Activated B cell treated with CpG ODN at 0.5 μM for 24 hours (primary cell): ENCODE measurements at regions of chr5 and their contacts with region 1.

Region 1: DNA sequence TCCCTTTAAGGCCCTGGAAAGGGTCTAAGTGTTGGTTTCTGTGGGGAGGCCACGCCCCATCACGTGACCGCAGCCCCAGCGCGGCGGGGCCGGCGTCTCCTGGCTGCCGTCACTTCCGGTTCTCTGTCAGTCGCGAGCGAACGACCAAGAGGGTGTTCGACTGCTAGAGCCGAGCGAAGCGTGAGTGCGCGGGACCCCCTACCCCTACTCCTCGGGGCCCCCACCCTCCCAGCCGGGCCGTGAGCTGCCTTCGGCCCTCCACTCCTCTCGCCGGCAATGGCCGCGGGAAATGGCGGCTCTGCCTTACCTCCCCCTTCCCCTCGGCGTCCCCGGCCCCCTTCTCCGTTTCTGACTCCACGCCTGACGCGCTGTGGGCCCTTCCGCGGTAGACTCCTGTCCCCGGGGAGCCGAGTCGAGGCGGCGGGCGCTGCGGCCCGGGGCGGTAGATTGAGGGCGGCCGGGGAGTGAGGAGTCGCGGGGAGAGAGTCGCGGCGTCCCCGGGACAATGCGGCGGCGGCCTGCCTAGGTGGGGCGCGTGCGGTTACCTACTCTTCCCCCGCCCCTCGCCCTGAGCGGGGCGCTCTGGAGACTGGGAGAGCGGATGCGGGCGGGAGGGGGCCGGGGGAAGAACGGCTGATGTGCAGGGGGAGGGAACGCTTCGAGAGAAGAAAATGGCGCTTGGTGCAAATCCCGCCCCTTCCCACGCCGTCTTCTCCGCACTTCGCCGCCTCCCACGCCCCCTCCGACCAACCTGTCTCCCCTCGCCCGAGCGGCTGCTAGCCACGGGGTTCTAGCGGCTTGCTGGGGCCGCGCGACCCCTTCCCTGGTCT is at the start of gene SUB1:
- DNase-seq: peak; percentile 88
- ATAC-seq: peak; percentile 60
- H3K4me3 Mint-ChIP-seq: peak within 1 kb of the TSS; percentile 91
- H3K27ac Mint-ChIP-seq: peak within 1 kb of the TSS; percentile 95
- H3K4me1 Mint-ChIP-seq: peaks cover 85% of the 10 kb centered on the region
- H3K27me3 Mint-ChIP-seq: no peaks in the 10 kb centered on the region
- CTCF ChIP-seq: no peak
- total RNA-seq, gene SUB1: 213 and 237 TPM in 2 replicates

Region 2: DNA sequence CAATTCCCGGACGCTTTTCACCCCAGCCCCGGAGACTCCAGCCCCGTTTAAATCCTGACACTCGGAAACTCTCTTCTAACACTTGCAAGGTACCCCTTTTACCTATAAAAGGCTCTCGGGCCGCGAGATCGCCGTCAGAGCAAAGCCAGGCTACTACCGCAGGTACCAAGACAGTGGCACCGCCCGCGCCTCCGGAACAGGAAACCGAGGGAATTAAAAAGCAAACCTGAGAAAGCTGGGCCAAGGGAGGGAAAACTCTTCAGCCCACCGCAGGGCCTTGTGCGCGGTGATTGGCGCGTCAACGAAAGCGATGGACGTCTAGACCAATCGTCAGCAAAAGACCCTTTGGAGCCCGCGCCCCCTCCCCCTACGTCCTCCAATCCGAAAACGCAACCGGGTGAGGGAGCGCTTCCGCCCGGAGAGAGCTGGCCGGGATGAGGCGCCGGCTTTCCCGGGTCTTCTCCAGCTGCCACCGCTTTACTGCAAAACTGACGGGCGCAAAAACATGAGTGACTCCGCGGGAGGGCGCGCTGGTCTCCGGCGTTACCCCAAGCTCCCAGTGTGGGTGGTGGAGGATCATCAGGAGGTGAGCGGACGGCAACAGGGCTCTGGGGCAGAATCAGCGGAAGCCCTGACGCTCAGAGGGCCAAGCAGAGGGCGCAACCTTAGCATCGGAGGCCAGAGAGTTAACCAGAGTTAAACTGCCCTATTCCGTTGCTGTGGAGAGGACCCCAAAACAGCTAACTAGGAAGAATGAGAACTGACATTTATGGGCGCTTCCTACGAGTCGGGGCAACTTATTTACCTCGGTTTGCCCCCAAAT is 1053.6 kb before region 1 on chr5 and contains the starts of genes C5orf22 and DROSHA:
- CTCF ChIA-PET with region 1: no interaction called
- POLR2A ChIA-PET with region 1: no interaction called
- intact Hi-C with region 1: loop called (anchors 5 kb)
- DNase-seq: peak; percentile 81
- ATAC-seq: peak; percentile 98
- H3K4me3 Mint-ChIP-seq: peak within 1 kb of the TSS; percentile 99
- H3K27ac Mint-ChIP-seq: peak within 1 kb of the TSS; percentile 92
- H3K4me1 Mint-ChIP-seq: peaks cover 43% of the 10 kb centered on the region
- H3K27me3 Mint-ChIP-seq: no peaks in the 10 kb centered on the region
- CTCF ChIP-seq: no peak
- total RNA-seq, gene C5orf22: 27.0 and 27.1 TPM in 2 replicates
- total RNA-seq, gene DROSHA: 53.8 and 59.8 TPM in 2 replicates

Region 3: GRCh38 chr5:32312647-32313523 is 272.8 kb before region 1 on chr5 and contains the start of gene MTMR12:
- CTCF ChIA-PET with region 1: no interaction called
- POLR2A ChIA-PET with region 1: no interaction called
- intact Hi-C with region 1: loop called (anchors 1 kb)
- DNase-seq: peak; percentile 100
- ATAC-seq: peak; percentile 89
- H3K4me3 Mint-ChIP-seq: peak within 1 kb of the TSS; percentile 90
- H3K27ac Mint-ChIP-seq: peak within 1 kb of the TSS; percentile 91
- H3K4me1 Mint-ChIP-seq: peaks cover 41% of the 10 kb centered on the region
- H3K27me3 Mint-ChIP-seq: no peaks in the 10 kb centered on the region
- CTCF ChIP-seq: no peak
- total RNA-seq, gene MTMR12: 26.8 and 36.3 TPM in 2 replicates

Region 4: GRCh38 chr5:32444431-32445286 is 141.0 kb before region 1 on chr5 and contains the start of gene ZFR:
- CTCF ChIA-PET with region 1: interaction called, 9 read pairs
- POLR2A ChIA-PET with region 1: interaction called, 19 read pairs
- intact Hi-C with region 1: loop called (anchors 1 kb)
- DNase-seq: peak; percentile 90
- ATAC-seq: peak; percentile 85
- H3K4me3 Mint-ChIP-seq: peak within 1 kb of the TSS; percentile 92
- H3K27ac Mint-ChIP-seq: peak within 1 kb of the TSS; percentile 92
- H3K4me1 Mint-ChIP-seq: peaks cover 60% of the 10 kb centered on the region
- H3K27me3 Mint-ChIP-seq: no peaks in the 10 kb centered on the region
- CTCF ChIP-seq: no peak
- total RNA-seq, gene ZFR: 60.2 and 64.3 TPM in 2 replicates

Region 5: DNA sequence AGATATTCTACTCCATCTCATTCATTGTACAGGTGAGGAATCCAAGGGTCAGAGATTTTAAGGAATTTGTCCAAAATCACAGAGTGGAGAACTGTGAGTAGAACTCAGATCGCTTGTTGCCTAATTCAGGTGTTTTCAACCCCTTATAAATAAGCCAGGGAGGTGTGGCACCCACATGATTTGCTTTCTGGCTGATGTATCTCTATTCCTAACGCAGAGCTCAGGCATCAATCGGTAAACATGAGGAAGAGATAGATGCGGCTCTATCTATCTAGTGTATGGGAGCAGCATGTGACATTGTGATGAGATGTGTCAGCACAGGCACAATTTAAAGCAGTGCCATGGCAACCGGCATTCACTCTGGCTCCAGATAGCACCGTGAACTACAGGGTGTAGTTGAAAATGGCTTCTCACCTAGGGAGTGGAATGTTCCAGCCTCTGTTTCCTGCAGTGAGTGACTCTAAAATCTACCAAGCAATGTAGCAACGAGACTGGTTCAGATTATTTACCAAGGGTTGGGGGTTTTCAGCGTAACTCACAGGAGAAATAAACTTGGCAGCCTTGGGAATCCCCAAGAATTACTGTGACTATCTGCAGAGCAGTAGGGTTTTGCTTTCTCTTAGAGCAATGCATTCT is 53.7 kb before region 1 on chr5:
- CTCF ChIA-PET with region 1: interaction called, 22 read pairs
- POLR2A ChIA-PET with region 1: interaction called, 44 read pairs
- intact Hi-C with region 1: loop called (anchors 1 kb)
- DNase-seq: no peak
- ATAC-seq: peak; percentile 73
- H3K4me3 Mint-ChIP-seq: peak overlapping the region; percentile 80
- H3K27ac Mint-ChIP-seq: peak overlapping the region; percentile 77
- H3K4me1 Mint-ChIP-seq: peaks cover 43% of the 10 kb centered on the region
- H3K27me3 Mint-ChIP-seq: no peaks in the 10 kb centered on the region
- CTCF ChIP-seq: no peak

Region 6: GRCh38 chr5:32613050-32613672 is 27.5 kb after region 1 on chr5:
- CTCF ChIA-PET with region 1: interaction called, 12 read pairs
- POLR2A ChIA-PET with region 1: no interaction called
- intact Hi-C with region 1: no loop called
- DNase-seq: peak; percentile 66
- ATAC-seq: peak; percentile 76
- H3K4me3 Mint-ChIP-seq: no peak overlapping the region
- H3K27ac Mint-ChIP-seq: no peak overlapping the region
- H3K4me1 Mint-ChIP-seq: peaks cover 2% of the 10 kb centered on the region
- H3K27me3 Mint-ChIP-seq: no peaks in the 10 kb centered on the region
- CTCF ChIP-seq: peak; percentile 53

Region 7: DNA sequence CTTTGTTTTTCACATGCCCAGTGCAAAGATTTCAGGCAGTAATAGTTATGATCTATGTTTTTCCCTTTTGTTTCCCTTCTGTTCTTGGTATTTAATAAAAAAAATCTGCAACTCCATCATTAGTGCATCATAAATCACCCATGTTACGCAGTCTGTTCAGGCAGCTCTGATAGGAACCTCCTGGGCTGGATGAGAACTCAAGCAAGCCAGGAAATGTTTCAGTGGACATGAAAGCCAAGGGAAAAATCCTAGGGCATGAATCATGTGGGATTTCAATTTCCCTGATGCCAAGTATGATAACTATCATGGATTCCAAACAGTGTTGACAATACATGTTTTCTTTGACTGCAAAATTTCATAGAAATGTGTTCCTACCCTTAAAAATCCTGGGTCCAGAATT is 735.4 kb after region 1 on chr5:
- CTCF ChIA-PET with region 1: no interaction called
- POLR2A ChIA-PET with region 1: no interaction called
- intact Hi-C with region 1: no loop called
- DNase-seq: no peak
- ATAC-seq: no peak
- H3K4me3 Mint-ChIP-seq: no peak overlapping the region
- H3K27ac Mint-ChIP-seq: no peak overlapping the region
- H3K4me1 Mint-ChIP-seq: no peaks in the 10 kb centered on the region
- H3K27me3 Mint-ChIP-seq: no peaks in the 10 kb centered on the region
- CTCF ChIP-seq: no peak